Thyroid gland (tissue), 4 donors: ENCODE measurements at regions of chr14 and their contacts with region 1.

Region 1: GRCh38 chr14:69726761-69727511 is 40.0 kb upstream of the SRSF5 start:
- DNase-seq: peak; percentile 70 to 79
- H3K4me3 ChIP-seq: peak overlapping the region in 1 of 3 donors; percentile 7
- H3K27ac ChIP-seq: peak overlapping the region in 2 of 3 donors; percentile 10 to 20
- H3K4me1 ChIP-seq: peaks cover 0 to 10% of the 10 kb centered on the region in 2 donors
- H3K27me3 ChIP-seq: no peaks in the 10 kb centered on the region
- CTCF ChIP-seq: peak; percentile 90 to 99 (median 97)
- POLR2A ChIP-seq: no peak

Region 2: DNA sequence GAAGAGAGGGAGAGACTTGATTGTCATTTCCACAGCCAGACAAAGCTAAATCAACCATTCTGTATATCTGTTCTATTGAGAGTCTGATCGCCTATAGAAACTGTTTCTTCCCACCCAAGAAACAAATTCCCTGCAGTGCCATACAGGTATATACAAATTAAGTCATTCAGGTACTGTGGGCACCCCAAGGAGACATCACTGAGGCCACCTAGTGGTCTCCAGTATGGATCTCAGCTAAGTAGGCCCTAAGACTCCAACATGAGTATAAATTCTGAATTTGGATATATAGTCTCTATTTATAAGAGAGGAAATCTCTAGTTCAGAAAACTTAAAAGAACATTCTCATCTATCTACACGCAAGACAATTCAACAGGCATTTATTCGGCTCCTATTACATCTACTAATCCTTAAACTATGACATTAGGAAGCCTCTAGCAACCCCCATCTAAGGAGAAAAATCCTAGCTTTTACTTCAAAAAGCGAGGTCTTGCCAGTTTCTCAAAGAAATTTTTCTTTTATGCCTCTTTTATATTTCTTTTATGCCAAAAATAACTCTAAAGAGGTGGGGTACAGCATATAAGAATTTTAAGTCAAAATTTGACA is 636.6 kb before region 1 on chr14:
- intact Hi-C with region 1: no loop called
- DNase-seq: peak; percentile 54 to 55
- H3K4me3 ChIP-seq: no peak overlapping the region
- H3K27ac ChIP-seq: peak overlapping the region; percentile 34 to 91 (median 42)
- H3K4me1 ChIP-seq: peaks cover 33 to 48% of the 10 kb centered on the region in 2 donors
- H3K27me3 ChIP-seq: no peaks in the 10 kb centered on the region
- CTCF ChIP-seq: peak in 5 of 6 experiments; percentile 36 to 74 (median 71)
- POLR2A ChIP-seq: no peak

Region 3: DNA sequence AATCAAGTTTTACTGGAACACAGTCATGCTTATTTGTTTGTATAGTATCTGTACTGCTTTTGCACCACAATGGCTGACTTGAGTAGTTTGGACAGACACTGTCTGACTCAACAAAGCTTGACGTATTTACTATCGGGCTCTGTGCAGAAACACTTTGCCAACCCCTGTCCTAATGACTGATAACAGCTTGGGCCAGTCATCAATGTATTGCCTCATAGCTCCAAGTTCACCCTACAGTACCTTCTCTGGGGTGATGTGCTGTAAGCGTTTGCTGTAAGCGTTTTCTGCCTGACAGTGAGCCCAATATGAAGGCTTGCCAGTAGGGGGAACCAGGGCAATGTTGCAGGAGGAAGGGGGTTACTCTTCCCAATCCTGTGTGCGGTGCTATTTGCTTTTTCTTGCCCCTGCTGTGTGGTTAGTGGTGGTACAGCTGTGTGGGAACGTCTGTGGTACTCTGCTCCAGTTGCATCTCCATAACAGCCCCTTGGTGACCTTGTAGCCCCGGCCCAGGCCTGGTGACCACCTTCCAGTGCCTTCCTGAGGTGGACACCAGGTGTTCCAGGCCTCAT is 146.8 kb before region 1 on chr14:
- intact Hi-C with region 1: loop called (anchors 5 kb)
- DNase-seq: no peak
- H3K4me3 ChIP-seq: no peak overlapping the region
- H3K27ac ChIP-seq: no peak overlapping the region
- H3K4me1 ChIP-seq: peaks cover 0 to 11% of the 10 kb centered on the region in 2 donors
- H3K27me3 ChIP-seq: no peaks in the 10 kb centered on the region
- CTCF ChIP-seq: peak in 2 of 6 experiments; percentile 37 to 38
- POLR2A ChIP-seq: no peak

Region 4: DNA sequence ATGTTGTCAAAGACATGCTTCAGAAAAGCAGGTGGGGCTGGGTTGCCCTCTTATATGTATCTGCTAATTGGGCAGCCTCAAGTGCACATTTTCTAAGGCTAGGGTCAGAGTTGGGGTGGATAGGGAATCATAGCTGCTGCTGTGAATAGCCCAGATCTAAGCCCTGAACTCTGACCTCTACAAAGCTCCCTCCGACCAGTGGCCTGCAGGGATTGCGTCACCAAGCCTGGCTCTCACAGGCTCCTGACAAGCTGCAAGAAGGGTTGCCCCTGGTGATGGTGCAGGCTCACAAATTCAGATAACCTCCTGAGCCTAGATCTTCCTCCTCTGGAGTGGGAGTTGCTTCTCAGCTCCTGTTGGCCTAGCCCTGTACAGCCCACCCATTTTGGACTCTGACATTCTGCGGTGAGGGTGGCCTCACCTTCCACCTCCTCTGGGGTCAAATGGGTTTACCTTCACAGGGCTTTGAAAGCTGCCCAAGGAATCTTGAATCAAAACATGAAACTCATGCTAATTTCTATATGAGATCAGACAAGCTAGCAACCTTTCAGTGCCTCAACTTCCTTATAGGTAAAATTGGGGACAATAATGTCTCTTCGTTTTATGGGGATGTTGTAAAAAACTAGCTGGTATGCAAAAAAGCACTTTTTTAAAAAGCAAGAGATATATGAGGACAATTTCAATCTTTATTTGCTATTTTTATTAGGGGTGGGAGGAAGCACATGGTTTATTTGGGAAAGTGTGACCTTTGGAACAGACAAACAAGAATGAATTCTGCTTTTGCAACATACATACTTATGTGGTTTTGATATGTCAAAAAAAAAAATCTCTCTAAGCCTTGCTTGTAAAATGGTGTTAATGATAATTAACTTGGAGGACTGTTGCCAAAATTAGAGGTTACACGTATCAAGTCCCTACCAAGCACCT is 120.4 kb before region 1 on chr14:
- intact Hi-C with region 1: loop called (anchors 2 kb)
- DNase-seq: no peak
- H3K4me3 ChIP-seq: no peak overlapping the region
- H3K27ac ChIP-seq: no peak overlapping the region
- H3K4me1 ChIP-seq: peaks cover 11% of the 10 kb centered on the region in 2 donors
- H3K27me3 ChIP-seq: no peaks in the 10 kb centered on the region
- CTCF ChIP-seq: no peak
- POLR2A ChIP-seq: no peak